A673 (cell line): ENCODE measurements at regions of chr5 and their contacts with region 1.

Region 1: GRCh38 chr5:16345454-16345853 is 120.1 kb downstream of the ZNF622 start:
- DNase-seq: peak; percentile 51
- H3K4me3 ChIP-seq: no peak overlapping the region
- H3K27ac ChIP-seq: no peak overlapping the region
- H3K4me1 ChIP-seq: no peaks in the 10 kb centered on the region
- H3K27me3 ChIP-seq: no peaks in the 10 kb centered on the region
- CTCF ChIP-seq: peak; percentile 57

Region 2: DNA sequence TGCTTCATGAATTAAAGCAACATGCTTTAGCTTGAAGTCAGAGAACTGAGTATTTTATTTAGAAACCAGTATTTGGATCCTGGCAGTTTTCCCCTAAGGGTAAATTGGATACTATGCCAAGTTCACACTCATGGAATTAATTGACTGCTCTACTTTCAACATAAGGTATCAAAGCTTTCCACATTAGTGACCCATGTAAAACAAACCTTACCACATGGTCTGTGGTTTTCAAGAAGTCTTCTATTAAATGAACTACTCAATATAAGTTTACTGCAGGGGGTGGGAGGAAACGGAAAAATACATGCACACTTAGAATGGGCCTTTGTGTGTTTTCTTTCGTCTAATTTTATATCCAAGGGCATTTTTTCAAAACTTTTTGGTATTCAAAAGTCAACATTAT is 1077.5 kb before region 1 on chr5:
- CTCF ChIA-PET with region 1: no interaction called
- POLR2A ChIA-PET with region 1: no interaction called
- intact Hi-C with region 1: no loop called
- DNase-seq: no peak
- H3K4me3 ChIP-seq: no peak overlapping the region
- H3K27ac ChIP-seq: no peak overlapping the region
- H3K4me1 ChIP-seq: no peaks in the 10 kb centered on the region
- H3K27me3 ChIP-seq: no peaks in the 10 kb centered on the region
- CTCF ChIP-seq: no peak

Region 3: DNA sequence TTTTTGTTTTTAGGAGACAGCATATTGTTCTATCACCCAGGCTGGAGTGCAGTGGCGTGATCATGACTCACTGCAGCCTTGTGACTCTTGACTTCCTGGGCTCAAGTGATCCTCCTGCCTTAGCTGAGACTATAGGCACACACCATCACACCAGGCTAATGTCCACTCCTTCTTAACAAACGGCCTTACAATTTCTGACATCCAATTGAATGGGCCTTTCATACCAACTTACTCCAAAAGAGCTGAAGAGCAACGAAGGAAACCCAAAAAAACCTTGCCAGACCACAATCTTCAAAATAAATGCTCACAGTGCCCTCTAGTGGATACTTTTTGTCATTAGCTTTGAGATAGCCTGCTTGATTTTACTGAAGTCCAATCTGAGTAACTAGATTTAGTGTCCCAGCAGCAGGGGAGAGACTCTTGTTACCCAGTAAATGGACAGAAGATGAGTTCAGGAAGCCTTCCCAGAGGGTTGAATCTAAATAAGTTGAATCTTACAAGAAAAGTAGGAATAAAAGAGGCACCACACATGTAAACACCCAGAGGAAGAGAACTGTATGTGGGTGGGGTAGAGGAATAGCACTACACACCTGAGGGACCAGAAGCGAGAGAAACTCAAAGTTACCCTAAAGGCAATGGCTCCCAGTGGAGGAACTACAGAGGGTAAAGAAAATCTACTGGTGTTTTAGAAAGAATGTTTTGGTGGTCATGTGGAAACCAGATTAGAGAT is 110.8 kb after region 1 on chr5:
- CTCF ChIA-PET with region 1: interaction called, 3 read pairs
- POLR2A ChIA-PET with region 1: no interaction called
- intact Hi-C with region 1: loop called (anchors 1 kb)
- DNase-seq: peak; percentile 84
- H3K4me3 ChIP-seq: no peak overlapping the region
- H3K27ac ChIP-seq: no peak overlapping the region
- H3K4me1 ChIP-seq: no peaks in the 10 kb centered on the region
- H3K27me3 ChIP-seq: no peaks in the 10 kb centered on the region
- CTCF ChIP-seq: peak; percentile 78

Region 4: DNA sequence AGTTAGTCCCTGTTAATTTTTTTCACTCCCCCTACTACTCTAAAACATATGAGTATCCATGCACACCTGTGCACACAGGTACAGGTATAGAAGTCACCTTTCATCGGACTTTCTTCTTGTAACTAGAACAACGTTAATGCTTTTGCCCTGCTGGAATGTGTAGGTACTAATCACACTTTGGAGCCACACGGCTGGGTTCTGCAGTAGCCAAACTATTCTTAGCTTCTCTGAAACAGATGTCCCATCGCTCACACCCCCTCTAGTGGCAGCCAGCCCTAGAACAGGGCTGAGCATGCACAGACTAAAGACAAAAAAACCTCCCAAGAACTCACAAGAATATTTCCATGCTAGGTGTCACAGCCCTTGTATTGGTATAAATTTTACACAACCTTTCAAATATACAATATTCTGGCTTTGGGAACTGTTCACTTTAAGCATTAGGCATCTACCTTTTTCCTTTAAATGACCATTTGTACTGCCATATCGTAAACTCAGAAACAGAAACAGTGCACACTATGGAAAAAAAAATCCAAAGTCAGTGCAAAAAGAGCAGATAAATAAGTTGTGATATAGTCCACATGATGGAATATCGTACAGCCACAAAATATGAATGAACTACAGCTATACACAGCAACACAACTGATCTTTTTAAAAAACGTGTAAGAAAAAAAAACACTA is 207.4 kb after region 1 on chr5:
- CTCF ChIA-PET with region 1: no interaction called
- POLR2A ChIA-PET with region 1: no interaction called
- intact Hi-C with region 1: loop called (anchors 10 kb)
- DNase-seq: peak; percentile 79
- H3K4me3 ChIP-seq: no peak overlapping the region
- H3K27ac ChIP-seq: no peak overlapping the region
- H3K4me1 ChIP-seq: peaks cover 11% of the 10 kb centered on the region
- H3K27me3 ChIP-seq: no peaks in the 10 kb centered on the region
- CTCF ChIP-seq: peak; percentile 94

Region 5: DNA sequence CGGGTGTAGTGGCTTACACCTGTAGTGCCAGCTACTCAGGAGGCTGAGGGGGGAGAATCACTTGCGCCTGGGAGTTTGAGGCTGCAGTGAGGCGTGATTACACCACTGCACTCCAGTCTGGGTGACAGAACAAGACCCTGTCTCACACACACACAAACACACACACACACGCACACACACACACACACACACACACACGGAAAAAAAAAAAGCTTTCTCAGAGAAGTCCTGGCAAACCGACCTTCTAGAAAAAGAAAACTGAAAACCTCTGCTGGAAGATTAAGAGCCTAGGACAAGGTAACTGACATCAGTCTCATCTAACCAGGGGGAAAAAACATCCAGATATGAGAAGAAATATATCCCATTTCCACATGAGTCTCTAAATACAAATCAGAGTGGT is 411.7 kb after region 1 on chr5:
- CTCF ChIA-PET with region 1: interaction called, 16 read pairs
- POLR2A ChIA-PET with region 1: no interaction called
- intact Hi-C with region 1: no loop called
- DNase-seq: no peak
- H3K4me3 ChIP-seq: no peak overlapping the region
- H3K27ac ChIP-seq: no peak overlapping the region
- H3K4me1 ChIP-seq: peaks cover 38% of the 10 kb centered on the region
- H3K27me3 ChIP-seq: no peaks in the 10 kb centered on the region
- CTCF ChIP-seq: no peak